Heart left ventricle (tissue), 16 donors: ENCODE measurements at regions of chr7 and their contacts with region 1.

Region 1: DNA sequence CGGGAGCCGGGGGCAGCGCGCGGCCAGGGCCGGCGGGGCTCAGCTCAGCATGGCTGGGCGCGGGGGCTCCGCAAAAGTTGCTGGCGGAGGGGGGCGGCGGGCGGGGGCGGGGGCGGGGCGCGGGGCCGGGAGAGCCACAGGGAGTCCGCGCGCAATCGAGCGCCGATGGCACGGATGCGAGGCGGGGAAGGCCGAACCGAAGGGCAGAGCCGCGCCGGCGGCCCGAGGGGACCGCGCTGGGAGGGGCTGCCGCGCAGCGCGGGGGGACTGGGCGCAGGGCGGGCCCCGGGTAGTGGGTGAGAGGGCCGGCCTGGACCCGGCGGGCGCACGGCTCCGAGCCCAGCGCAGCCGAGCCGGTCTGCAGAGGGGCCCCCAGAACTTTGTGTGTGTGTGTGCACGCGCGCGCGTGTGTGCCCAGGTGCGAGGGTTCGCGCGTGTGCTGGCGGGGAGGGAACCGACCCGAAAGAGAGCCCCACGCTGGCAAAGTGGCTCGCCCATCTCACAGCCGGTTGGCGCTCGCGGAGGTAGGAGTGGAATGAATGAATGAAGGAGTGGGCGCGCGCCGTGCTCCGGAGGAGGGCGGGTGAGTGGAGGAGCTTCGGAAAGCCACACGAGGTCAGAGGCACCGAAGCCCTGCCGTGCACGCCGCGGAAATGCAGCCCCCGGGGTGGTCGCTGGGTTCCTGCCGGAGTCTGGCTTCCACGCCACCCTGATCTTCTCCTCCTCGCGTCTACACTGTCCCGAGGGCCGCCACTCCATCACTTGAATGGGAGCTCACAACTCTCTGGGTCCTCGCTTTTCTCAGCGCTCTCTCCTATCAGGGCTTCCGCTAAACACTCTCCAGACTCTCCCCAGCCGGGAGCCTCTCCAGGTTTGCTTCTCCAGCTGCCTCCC is at the start of gene HIPK2:
- DNase-seq: peak; percentile 83 to 90 (median 90)
- ATAC-seq: peak; percentile 51 to 88 (median 78)
- H3K4me3 ChIP-seq: peak within 1 kb of the TSS; percentile 65 to 95 (median 90)
- H3K27ac ChIP-seq: peak within 1 kb of the TSS; percentile 82 to 98 (median 94)
- H3K4me1 ChIP-seq: peaks cover 0 to 42% (median 26%) of the 10 kb centered on the region in 12 donors
- H3K27me3 ChIP-seq: no peaks in the 10 kb centered on the region
- CTCF ChIP-seq: no peak
- POLR2A ChIP-seq: no peak
- total RNA-seq, gene HIPK2: 102 to 244 (median 143) TPM

Region 2: DNA sequence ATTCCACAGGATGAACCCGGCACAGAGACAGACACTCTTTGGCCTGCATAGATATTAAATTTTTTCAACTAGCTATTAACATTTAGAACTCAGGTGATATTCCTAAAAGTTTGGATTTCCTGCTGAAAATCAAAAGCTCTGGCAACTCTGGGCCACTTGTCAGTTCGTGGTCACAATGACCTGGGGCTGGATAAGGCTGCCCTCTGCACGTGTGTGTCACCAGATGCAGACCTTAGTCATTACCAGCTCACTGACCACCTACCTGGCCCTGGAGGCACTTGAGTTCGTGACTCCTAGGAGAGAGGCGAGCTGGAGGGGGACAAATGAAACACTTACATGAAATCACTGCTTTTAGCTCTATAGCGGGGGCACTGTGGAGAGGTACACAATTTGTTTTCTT is 126.9 kb before region 1 on chr7:
- intact Hi-C with region 1: loop called (anchors 1 to 5 kb)
- DNase-seq: peak in 1 of 5 donors; percentile 41
- ATAC-seq: no peak
- H3K4me3 ChIP-seq: no peak overlapping the region
- H3K27ac ChIP-seq: peak overlapping the region; percentile 28 to 84 (median 74)
- H3K4me1 ChIP-seq: peaks cover 10 to 96% (median 79%) of the 10 kb centered on the region in 12 donors
- H3K27me3 ChIP-seq: no peaks in the 10 kb centered on the region
- CTCF ChIP-seq: no peak
- POLR2A ChIP-seq: no peak

Region 3: GRCh38 chr7:139725077-139725476 is 53.1 kb before region 1 on chr7:
- intact Hi-C with region 1: loop called in 2 of 10 experiments (anchors 5 to 10 kb)
- DNase-seq: no peak
- ATAC-seq: peak in 1 of 4 donors; percentile 5
- H3K4me3 ChIP-seq: no peak overlapping the region
- H3K27ac ChIP-seq: peak overlapping the region in 9 of 12 donors; percentile 3 to 97 (median 59)
- H3K4me1 ChIP-seq: peaks cover 15 to 90% (median 62%) of the 10 kb centered on the region in 12 donors
- H3K27me3 ChIP-seq: no peaks in the 10 kb centered on the region
- CTCF ChIP-seq: no peak
- POLR2A ChIP-seq: no peak

Region 4: DNA sequence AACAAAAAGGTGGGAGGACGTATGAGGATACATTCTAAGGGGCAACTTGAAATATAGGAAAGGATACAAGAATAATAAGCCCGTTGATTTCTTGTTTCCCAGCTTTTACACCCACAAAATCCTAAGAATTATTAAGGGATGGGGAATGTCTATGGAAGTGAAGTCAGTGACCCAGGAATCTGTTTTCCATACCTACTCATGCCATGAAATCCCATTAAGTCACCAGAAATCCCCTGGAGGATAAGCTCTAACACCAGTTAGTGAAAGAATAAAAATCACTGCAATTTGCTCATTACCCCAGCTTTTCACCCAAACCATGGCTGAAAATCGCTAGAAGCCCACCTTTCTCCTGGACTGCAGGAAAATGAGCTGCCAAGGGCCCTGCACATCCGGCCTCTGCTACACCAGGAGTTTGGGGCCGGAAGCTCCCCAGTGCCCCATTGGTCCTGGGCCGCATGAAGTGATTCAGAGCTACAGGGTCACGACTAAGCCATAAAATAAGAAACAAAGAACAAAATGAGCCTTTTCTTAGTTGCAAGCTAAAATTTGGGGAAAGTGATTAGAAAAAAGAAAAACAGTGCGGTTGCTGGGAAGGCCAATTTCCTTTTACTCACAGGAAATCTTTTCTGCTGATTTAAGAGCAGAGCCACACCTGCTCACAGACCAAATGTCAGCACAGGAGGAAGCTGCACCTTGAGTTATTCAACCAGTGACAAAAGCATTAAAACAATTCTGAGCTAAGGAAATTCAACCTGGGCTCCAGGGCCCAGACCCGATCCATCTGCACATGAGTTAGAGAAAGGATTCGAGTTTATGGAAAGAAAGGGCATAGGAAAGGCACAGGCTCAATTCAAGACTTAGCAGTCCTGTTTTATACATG is 40.7 kb before region 1 on chr7:
- intact Hi-C with region 1: loop called in 6 of 10 experiments (anchors 2 to 5 kb)
- DNase-seq: no peak
- ATAC-seq: no peak
- H3K4me3 ChIP-seq: no peak overlapping the region
- H3K27ac ChIP-seq: peak overlapping the region; percentile 63 to 97 (median 91)
- H3K4me1 ChIP-seq: peaks cover 26 to 100% (median 95%) of the 10 kb centered on the region in 12 donors
- H3K27me3 ChIP-seq: no peaks in the 10 kb centered on the region
- CTCF ChIP-seq: no peak
- POLR2A ChIP-seq: no peak

Region 5: GRCh38 chr7:139995017-139995931 is 217.1 kb after region 1 on chr7:
- intact Hi-C with region 1: loop called in 8 of 10 experiments (anchors 5 to 10 kb)
- DNase-seq: peak in 4 of 5 donors; percentile 46 to 62 (median 54)
- ATAC-seq: peak; percentile 84 to 90 (median 86)
- H3K4me3 ChIP-seq: no peak overlapping the region
- H3K27ac ChIP-seq: no peak overlapping the region
- H3K4me1 ChIP-seq: peaks cover 0 to 9% (median 0%) of the 10 kb centered on the region in 12 donors
- H3K27me3 ChIP-seq: no peaks in the 10 kb centered on the region
- CTCF ChIP-seq: no peak
- POLR2A ChIP-seq: no peak